ENCODE measurements at regions of chr1 and their contacts with region 1.

Region 1: GRCh38 chr1:222455188-222455879 is 92.6 kb downstream of the HHIPL2 start:
- DNase-seq: peak; percentile 73
- H3K4me3 ChIP-seq: no peak overlapping the region
- H3K27ac ChIP-seq: no peak overlapping the region
- H3K4me1 ChIP-seq: no peaks in the 10 kb centered on the region
- H3K27me3 ChIP-seq: peaks cover 2 to 3% of the 10 kb centered on the region in 2 experiments
- CTCF ChIP-seq: peak; percentile 90 to 94
- POLR2A ChIP-seq: no peak

Region 2: DNA sequence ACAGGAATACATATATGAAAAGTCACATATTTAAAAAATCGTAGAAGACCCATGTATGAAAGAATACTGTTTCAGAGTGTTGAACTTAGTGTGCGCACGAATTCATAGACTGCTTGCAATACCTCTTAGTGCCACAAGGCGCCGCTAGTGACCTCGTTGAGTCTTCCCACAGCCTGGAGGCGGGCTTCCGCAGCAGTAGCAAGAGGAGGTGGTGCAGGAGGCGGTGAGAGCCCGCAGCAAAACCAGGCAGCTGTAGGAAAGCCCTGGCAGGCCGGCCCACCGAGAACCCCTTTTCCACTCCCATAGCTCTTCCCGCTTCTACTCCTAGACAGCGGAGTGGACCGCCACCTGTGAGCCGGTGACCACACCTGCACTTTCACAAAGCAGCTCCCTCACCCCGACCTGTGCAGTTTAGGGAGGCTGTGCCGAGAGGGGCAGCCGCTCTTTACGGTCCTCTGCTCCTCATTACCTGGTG is 1645.1 kb before region 1 on chr1:
- CTCF ChIA-PET with region 1: interaction called, 34 read pairs
- POLR2A ChIA-PET with region 1: no interaction called
- dilution Hi-C with region 1: no loop called
- intact Hi-C with region 1: loop called (anchors 1 kb)
- DNase-seq: peak; percentile 82
- H3K4me3 ChIP-seq: no peak overlapping the region
- H3K27ac ChIP-seq: no peak overlapping the region
- H3K4me1 ChIP-seq: peaks cover 8% of the 10 kb centered on the region
- H3K27me3 ChIP-seq: peaks cover 6 to 11% of the 10 kb centered on the region in 2 experiments
- CTCF ChIP-seq: peak; percentile 89 to 95
- POLR2A ChIP-seq: no peak

Region 3: GRCh38 chr1:221263831-221264767 is 1191.2 kb before region 1 on chr1:
- CTCF ChIA-PET with region 1: interaction called, 82 read pairs
- POLR2A ChIA-PET with region 1: no interaction called
- dilution Hi-C with region 1: no loop called
- intact Hi-C with region 1: loop called (anchors 1 kb)
- DNase-seq: peak; percentile 79
- H3K4me3 ChIP-seq: no peak overlapping the region
- H3K27ac ChIP-seq: peak overlapping the region; percentile 34
- H3K4me1 ChIP-seq: peaks cover 7% of the 10 kb centered on the region
- H3K27me3 ChIP-seq: no peaks in the 10 kb centered on the region
- CTCF ChIP-seq: peak; percentile 64 to 71
- POLR2A ChIP-seq: no peak

Region 4: DNA sequence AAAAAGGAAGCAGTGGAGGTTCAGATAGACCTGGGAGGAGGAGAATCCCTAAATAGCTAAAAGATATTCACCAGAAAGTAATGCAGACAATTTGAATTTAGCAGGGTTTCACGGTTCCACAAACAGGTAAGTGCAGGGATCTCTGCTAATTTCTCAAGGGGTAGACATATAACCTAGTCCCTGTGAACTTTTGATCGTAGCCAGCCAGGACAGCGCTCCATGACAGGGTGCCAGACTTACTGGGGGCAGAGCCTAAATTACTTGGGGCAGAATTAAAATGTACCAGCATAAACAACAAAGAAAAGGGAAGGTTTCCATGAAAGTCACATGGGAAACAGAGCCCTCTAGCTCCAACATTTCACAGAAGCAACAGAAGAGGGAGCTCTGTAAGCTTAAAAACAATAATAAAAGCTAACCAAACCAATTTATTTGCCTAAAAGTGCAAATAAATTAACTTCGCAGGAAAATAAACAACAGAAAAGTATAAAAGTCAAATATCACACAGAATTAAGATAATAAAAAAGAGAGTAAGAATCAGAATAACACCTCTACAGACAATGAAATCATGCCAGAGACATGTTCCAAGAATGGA is 911.7 kb before region 1 on chr1:
- CTCF ChIA-PET with region 1: interaction called, 37 read pairs
- POLR2A ChIA-PET with region 1: no interaction called
- dilution Hi-C with region 1: no loop called
- intact Hi-C with region 1: loop called (anchors 1 kb)
- DNase-seq: peak; percentile 25
- H3K4me3 ChIP-seq: no peak overlapping the region
- H3K27ac ChIP-seq: no peak overlapping the region
- H3K4me1 ChIP-seq: no peaks in the 10 kb centered on the region
- H3K27me3 ChIP-seq: peaks cover 0 to 2% of the 10 kb centered on the region in 2 experiments
- CTCF ChIP-seq: peak in 1 of 2 donors; percentile 30
- POLR2A ChIP-seq: no peak

Region 5: GRCh38 chr1:222465211-222466041 is 10.1 kb after region 1 on chr1:
- CTCF ChIA-PET with region 1: interaction called, 44 read pairs
- POLR2A ChIA-PET with region 1: no interaction called
- dilution Hi-C with region 1: no loop called
- intact Hi-C with region 1: no loop called
- DNase-seq: peak; percentile 97
- H3K4me3 ChIP-seq: peak overlapping the region; percentile 49 to 71 (median 53)
- H3K27ac ChIP-seq: peak overlapping the region; percentile 83
- H3K4me1 ChIP-seq: peaks cover 2% of the 10 kb centered on the region
- H3K27me3 ChIP-seq: peaks cover 6 to 7% of the 10 kb centered on the region in 2 experiments
- CTCF ChIP-seq: peak; percentile 95 to 100
- POLR2A ChIP-seq: peak; percentile 80

Measured in endothelial cell of umbilical vein (primary cell).